Lower lobe of right lung (tissue), 2 donors: ENCODE measurements at regions of chr11 and their contacts with region 1.

Region 1: GRCh38 chr11:9534791-9535781 is 38.4 kb upstream of the WEE1 start:
- DNase-seq: peak; percentile 86
- ATAC-seq: peak; percentile 82 to 89
- H3K4me3 ChIP-seq: no peak overlapping the region
- H3K27ac ChIP-seq: peak overlapping the region; percentile 41
- H3K4me1 ChIP-seq: peaks cover 14% of the 10 kb centered on the region
- H3K27me3 ChIP-seq: no peaks in the 10 kb centered on the region
- CTCF ChIP-seq: peak; percentile 88

Region 2: DNA sequence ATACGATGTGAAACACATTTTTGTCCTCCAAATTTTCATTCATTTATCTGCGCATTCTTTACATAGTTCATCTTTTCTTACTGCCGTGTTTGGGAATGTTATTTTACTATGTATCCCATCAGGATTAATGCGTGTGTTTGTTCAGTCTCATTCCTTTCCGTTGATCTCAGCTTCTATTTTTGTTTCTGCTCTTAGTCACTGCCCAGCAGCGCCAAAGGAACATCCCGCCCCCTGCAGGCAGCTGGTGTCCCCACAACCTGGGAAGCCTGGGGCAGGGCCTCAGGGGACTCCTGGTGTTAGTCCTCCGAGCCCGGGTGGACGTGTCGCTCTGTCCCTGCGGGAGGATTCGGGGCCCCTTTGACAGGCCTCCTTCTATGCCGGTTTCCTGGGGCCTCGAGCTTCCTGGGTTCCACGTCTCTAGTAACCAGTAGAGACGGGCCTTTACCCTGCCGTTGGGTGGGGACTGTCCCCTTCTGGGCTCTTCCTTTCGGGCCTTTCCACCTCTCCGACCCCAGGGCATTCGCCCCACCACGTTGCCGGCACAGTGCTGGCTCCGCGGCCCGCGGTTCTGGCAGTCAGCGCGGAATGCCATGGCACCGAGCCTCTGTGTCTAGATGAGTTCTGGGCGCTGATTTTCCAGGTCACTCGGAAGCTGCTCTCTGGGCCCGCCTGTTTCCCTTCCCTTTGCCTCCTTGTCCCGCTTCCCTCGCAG is 78.2 kb after region 1 on chr11:
- intact Hi-C with region 1: loop called (anchors 10 kb)
- DNase-seq: peak; percentile 95
- ATAC-seq: peak; percentile 94 to 96
- H3K4me3 ChIP-seq: peak overlapping the region; percentile 62
- H3K27ac ChIP-seq: peak overlapping the region; percentile 98
- H3K4me1 ChIP-seq: peaks cover 25% of the 10 kb centered on the region
- H3K27me3 ChIP-seq: no peaks in the 10 kb centered on the region
- CTCF ChIP-seq: peak; percentile 95

Region 3: GRCh38 chr11:10096987-10097386 is 561.9 kb after region 1 on chr11:
- intact Hi-C with region 1: no loop called
- DNase-seq: no peak
- ATAC-seq: no peak
- H3K4me3 ChIP-seq: no peak overlapping the region
- H3K27ac ChIP-seq: no peak overlapping the region
- H3K4me1 ChIP-seq: no peaks in the 10 kb centered on the region
- H3K27me3 ChIP-seq: no peaks in the 10 kb centered on the region
- CTCF ChIP-seq: no peak